HepG2 (cell line): ENCODE measurements at regions of chr7 and their contacts with region 1.

Region 1: GRCh38 chr7:104923010-104923421 is 91.0 kb upstream of the KMT2E start:
- DNase-seq: peak; percentile 84
- ATAC-seq: peak; percentile 95
- H3K4me3 ChIP-seq: no peak overlapping the region
- H3K27ac ChIP-seq: no peak overlapping the region
- H3K4me1 ChIP-seq: peaks cover 31% of the 10 kb centered on the region
- H3K27me3 ChIP-seq: 0 out of 5 replicates have a peak, but pooled peaks cover 0 to 3% of the 10 kb centered on the region in 2 experiments
- CTCF ChIP-seq: peak; percentile 90
- EP300 ChIP-seq: no peak
- POLR2A ChIP-seq: no peak
- RAD21 ChIP-seq: peak; percentile 89

Region 2: DNA sequence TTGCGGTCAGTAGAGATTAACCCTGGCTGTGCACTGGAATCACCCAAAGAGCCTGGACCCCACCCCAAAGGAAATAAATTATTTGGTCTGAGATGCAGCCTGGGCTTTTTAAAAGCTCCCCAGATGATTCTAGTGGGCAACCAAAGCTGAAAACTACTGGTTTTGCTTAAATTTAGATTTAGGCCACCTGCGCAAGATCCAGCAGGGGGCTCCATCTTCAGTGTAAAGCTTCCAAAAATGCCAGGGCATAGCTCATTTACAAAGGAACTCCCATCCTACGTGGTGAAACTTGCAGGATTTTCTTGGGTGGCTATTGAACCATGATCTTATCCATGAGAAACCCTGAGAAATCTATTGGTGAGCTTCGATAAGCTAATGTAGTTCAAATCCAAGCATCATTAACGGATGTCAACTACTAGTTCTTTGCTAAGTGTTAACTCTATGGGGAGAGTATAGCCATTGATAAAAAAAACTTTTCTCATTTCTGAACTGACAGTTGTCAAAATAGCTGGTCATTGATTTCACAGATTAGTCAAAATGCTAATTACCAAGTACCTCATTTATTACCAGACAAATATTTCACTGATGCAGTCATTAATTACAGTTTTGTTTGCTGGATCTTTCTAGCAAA is 279.3 kb before region 1 on chr7:
- CTCF ChIA-PET with region 1: no interaction called
- POLR2A ChIA-PET with region 1: no interaction called
- in situ Hi-C with region 1: loop called (anchors 10 kb)
- intact Hi-C with region 1: loop called (anchors 5 kb)
- DNase-seq: peak; percentile 7
- ATAC-seq: peak; percentile 31; the same call in 1 of the 3 replicates
- H3K4me3 ChIP-seq: no peak overlapping the region
- H3K27ac ChIP-seq: no peak overlapping the region
- H3K4me1 ChIP-seq: no peaks in the 10 kb centered on the region
- H3K27me3 ChIP-seq: peaks cover 0 to 7% of the 10 kb centered on the region in 2 experiments; a peak in 2 of 5 replicates
- CTCF ChIP-seq: peak; percentile 45
- EP300 ChIP-seq: no peak
- POLR2A ChIP-seq: no peak
- RAD21 ChIP-seq: 0 out of 2 replicates have a peak, but pooled peaks have one; percentile 21

Region 3: GRCh38 chr7:104983578-104984539 is 60.8 kb after region 1 on chr7:
- CTCF ChIA-PET with region 1: interaction called, 6 read pairs
- POLR2A ChIA-PET with region 1: no interaction called
- in situ Hi-C with region 1: no loop called
- intact Hi-C with region 1: loop called (anchors 1 kb)
- DNase-seq: peak; percentile 81
- ATAC-seq: peak; percentile 98
- H3K4me3 ChIP-seq: peak overlapping the region; percentile 70 to 79 (median 78)
- H3K27ac ChIP-seq: peak overlapping the region; percentile 92
- H3K4me1 ChIP-seq: peaks cover 34% of the 10 kb centered on the region
- H3K27me3 ChIP-seq: no peaks in the 10 kb centered on the region
- CTCF ChIP-seq: peak; percentile 72
- EP300 ChIP-seq: 0 out of 4 replicates have a peak, but pooled peaks of 1 of the 2 experiments have one; percentile 7
- POLR2A ChIP-seq: peak; percentile 74 to 90
- RAD21 ChIP-seq: peak; percentile 70

Region 4: DNA sequence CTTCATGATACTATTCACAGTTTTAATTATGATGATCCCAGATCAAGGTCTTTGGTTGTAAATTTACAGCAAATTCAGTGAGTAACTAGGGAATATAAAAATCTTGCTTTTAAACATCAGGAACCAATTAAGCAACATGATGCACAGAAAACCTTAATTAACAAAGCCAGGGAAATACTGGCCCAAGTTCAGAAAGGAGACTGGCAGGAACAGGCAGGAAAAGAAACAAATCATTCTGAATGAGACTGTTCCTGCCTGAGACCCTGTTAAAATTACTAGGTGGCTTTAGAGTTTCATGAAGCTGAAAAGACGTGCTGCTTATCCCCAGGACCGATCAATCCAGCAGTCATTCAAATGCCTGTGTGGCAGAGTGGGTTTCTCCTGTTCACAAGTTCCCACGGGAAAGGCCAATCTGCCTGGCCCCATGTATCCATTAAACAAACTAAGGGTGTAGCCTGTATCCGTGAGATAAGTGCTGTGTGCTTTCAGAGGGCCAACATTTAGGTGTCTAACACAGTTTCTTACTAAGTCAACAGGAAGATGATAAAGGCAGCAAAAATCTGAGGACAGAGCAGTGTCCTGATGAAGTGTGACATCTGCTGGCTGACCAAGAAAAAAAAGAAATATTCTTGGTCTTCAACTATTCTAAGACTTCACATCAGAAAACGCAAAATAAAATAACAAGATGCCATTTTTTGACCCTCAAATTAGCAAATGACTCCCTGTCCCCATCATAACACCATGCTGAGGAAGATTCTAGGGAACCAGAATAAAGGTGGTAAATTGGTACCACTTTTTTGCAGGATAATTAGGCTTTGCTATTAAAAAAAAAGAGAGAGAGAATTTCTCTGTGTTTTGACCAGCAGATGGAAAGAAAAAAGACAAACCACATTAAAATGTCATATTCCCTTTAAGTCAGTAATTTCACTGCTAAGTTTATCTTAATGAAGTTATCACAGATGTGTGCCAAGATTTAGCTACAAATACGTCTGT is 564.9 kb after region 1 on chr7:
- CTCF ChIA-PET with region 1: no interaction called
- POLR2A ChIA-PET with region 1: no interaction called
- in situ Hi-C with region 1: no loop called
- intact Hi-C with region 1: loop called (anchors 5 kb)
- DNase-seq: peak; percentile 62
- ATAC-seq: peak; percentile 84
- H3K4me3 ChIP-seq: no peak overlapping the region
- H3K27ac ChIP-seq: no peak overlapping the region
- H3K4me1 ChIP-seq: 0 out of 2 replicates have a peak, but pooled peaks cover 5% of the 10 kb centered on the region
- H3K27me3 ChIP-seq: no peaks in the 10 kb centered on the region
- CTCF ChIP-seq: peak; percentile 65
- EP300 ChIP-seq: no peak
- POLR2A ChIP-seq: no peak
- RAD21 ChIP-seq: no peak